PC-9 (cell line): ENCODE measurements at regions of chr16 and their contacts with region 1.

Region 1: GRCh38 chr16:84851192-84852127 is 31.7 kb downstream of the CRISPLD2 start:
- DNase-seq: peak; percentile 95 to 96
- H3K4me3 ChIP-seq: no peak overlapping the region
- H3K27ac ChIP-seq: peak overlapping the region; percentile 39
- H3K4me1 ChIP-seq: peaks cover 24% of the 10 kb centered on the region
- H3K27me3 ChIP-seq: no peaks in the 10 kb centered on the region
- CTCF ChIP-seq: no peak

Region 2: DNA sequence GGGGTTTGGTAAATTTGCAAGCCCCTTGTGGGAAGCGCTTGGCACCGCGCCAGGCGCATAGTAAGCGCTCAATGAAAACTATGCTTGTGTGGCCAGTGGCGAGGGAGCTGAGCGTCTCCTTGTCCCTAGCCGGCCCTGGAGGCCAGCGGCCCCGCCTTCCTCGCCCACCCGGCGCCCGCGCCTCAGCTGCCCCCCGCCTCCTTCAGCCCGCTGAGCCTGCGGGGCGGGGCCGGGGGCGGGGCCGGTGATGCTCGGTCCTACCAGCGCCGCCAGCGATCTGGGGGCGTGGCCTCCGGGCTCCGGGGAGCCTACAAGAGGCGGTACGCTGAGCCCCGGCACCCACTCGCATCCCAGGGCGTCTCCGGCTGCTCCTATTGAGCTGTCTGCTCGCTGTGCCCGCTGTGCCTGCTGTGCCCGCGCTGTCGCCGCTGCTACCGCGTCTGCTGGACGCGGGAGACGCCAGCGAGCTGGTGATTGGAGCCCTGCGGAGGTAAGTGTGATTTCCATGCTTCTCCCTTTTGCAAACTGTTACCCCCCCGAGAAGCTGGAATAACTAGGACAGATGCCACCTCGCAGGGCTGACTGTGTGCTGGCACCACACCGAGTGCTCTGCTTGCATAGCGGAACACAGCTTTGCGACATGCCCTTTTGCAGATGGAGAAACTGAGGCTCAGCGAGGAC is 31.7 kb before region 1 on chr16 and contains the start of gene CRISPLD2:
- CTCF ChIA-PET with region 1: no interaction called
- POLR2A ChIA-PET with region 1: no interaction called
- intact Hi-C with region 1: loop called (anchors 5 kb)
- DNase-seq: peak; percentile 85 to 94
- H3K4me3 ChIP-seq: peak within 1 kb of the TSS; percentile 59
- H3K27ac ChIP-seq: no peak within 1 kb of the TSS
- H3K4me1 ChIP-seq: peaks cover 27% of the 10 kb centered on the region
- H3K27me3 ChIP-seq: no peaks in the 10 kb centered on the region
- CTCF ChIP-seq: no peak
- total RNA-seq, gene CRISPLD2: 18.6 and 19.9 TPM in 2 replicates

Region 3: GRCh38 chr16:84881702-84882521 is 30.5 kb after region 1 on chr16:
- CTCF ChIA-PET with region 1: interaction called, 3 read pairs
- POLR2A ChIA-PET with region 1: no interaction called
- intact Hi-C with region 1: loop called (anchors 1 kb)
- DNase-seq: peak; percentile 55 to 77
- H3K4me3 ChIP-seq: no peak overlapping the region
- H3K27ac ChIP-seq: peak overlapping the region; percentile 78
- H3K4me1 ChIP-seq: peaks cover 68% of the 10 kb centered on the region
- H3K27me3 ChIP-seq: no peaks in the 10 kb centered on the region
- CTCF ChIP-seq: no peak